ENCODE measurements at regions of chr2 and their contacts with region 1.

Region 1: DNA sequence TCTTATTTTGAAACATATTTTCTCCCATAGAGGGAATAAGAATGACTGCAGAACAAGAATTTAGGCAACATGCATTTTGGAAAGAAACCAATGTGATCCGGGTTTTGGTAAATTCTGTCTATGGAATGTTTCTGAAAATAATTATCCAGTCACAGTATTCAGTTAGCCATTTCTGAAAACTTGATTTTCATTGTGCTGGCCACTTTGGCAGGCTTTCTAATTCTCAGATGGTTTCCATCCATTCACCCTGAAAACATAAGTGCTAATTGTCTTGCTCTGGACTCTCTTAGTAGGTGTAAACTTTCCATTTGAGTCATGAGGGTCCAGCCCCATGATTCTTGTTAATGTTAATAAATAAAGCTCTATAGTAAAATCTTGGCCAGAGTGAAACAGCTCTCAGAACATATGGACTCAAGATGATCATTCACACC is 176.5 kb downstream of the RBM43 start:
- DNase-seq: no peak
- H3K4me3 ChIP-seq: no peak overlapping the region
- H3K27ac ChIP-seq: no peak overlapping the region
- H3K4me1 ChIP-seq: no peaks in the 10 kb centered on the region
- H3K27me3 ChIP-seq: no peaks in the 10 kb centered on the region
- CTCF ChIP-seq: no peak
- EP300 ChIP-seq: no peak
- POLR2A ChIP-seq: no peak

Region 2: GRCh38 chr2:149767516-149767974 is 1317.7 kb before region 1 on chr2:
- intact Hi-C with region 1: no loop called
- DNase-seq: no peak
- H3K4me3 ChIP-seq: no peak overlapping the region
- H3K27ac ChIP-seq: no peak overlapping the region
- H3K4me1 ChIP-seq: no peaks in the 10 kb centered on the region
- H3K27me3 ChIP-seq: no peaks in the 10 kb centered on the region
- CTCF ChIP-seq: no peak
- EP300 ChIP-seq: no peak
- POLR2A ChIP-seq: no peak

Region 3: DNA sequence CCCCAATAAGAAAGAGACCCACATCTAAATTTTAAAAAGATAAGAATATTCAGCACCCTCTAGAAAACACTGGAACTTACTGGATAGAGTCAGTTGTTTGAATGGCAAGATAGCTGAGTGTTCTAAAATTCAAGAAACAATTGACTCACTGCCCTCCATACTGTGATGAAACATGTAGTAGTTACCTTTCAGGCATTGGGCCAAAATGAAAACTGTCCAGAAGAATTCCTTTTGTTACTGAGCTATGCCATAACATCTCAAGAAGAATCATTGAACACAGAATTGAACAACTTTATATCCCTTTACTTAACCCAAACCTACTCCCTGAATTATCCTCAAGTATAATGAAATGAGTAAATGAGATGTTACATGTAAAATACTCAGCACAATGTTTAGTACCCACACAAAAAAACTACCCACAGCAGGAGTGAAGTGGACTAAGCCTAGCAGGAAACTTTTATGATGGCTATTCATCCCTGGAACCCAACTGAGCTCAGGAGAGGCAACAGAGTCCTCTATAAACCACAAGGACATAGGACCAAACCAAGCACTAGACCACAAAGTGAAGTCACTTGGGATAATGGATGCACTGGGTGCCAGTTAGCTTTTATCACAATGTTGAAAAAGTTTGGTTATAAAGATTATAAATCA is 143.8 kb after region 1 on chr2:
- intact Hi-C with region 1: loop called in 1 of 4 experiments (anchors 10 kb)
- DNase-seq: no peak
- H3K4me3 ChIP-seq: no peak overlapping the region
- H3K27ac ChIP-seq: no peak overlapping the region
- H3K4me1 ChIP-seq: no peaks in the 10 kb centered on the region
- H3K27me3 ChIP-seq: no peaks in the 10 kb centered on the region
- CTCF ChIP-seq: no peak
- EP300 ChIP-seq: no peak
- POLR2A ChIP-seq: no peak